Activated naive CD4-positive, alpha-beta T cell treated with anti-CD3 and anti-CD28 coated beads, Interleukin-2, amount 10 ng/mL, durations not matched to agents 7 days and 5 days (primary cell): ENCODE measurements at regions of chr17 and their contacts with region 1.

Region 1: DNA sequence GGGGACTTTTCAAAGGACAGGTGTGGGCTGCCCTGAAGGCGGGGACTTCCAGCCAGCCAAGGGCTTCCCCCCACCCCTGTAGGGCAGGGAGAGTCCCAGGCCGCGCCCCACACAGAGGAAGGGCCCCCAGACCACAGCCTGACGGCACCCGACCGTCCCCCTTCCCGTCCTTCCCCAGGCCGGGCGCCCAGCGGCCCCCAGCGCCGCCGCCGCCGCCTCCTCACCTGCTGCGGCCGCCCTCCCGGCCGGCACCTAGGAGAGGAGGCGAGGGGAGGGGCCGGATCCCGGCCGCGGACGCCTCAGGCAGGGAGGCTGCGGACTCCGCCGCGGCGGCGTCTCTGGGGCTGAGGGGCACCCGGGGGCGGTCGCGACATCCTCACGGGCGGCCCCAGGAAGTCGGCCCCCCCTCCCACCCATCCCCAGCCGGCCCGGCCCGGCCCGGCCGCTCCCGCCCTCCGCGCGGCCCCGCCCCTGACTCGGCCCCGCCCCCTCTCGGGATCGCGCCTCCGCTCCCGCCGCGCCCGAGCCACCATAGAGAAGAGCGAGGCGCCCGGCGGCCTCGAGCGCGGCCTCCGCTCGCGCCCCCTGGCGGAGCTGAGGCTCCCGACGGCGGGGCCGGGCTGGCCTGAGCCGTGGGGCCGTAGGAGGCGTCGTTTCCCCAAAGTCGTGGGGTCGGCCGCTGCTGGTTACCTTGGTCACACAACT is 25.5 kb upstream of the RFFL start:
- DNase-seq: peak; percentile 89
- H3K4me3 Mint-ChIP-seq: peak overlapping the region; percentile 89
- H3K27ac Mint-ChIP-seq: peak overlapping the region; percentile 91
- H3K4me1 Mint-ChIP-seq: peaks cover 54% of the 10 kb centered on the region
- H3K27me3 Mint-ChIP-seq: no peaks in the 10 kb centered on the region

Region 2: DNA sequence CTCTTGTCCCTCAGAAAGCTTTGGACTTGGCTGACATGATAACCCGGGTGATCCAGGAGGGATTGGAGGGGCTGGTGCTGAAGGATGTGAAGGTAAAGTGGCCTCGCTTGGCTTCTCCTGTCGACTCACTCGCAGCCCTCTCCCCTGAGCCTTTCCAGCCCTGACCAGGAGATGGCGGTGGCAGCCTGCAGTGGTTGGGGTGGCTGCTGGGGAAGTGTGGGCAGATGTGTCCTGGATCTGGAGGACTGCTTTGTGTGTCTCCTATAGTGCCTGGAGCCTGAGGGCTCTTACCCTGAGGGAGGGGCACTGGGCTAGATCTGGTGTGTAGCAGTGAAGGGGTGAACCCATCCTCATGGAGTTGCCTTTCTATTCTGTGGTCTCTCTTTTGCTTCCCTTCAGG is 90.8 kb before region 1 on chr17:
- CTCF ChIA-PET with region 1: interaction called, 30 read pairs
- DNase-seq: peak; percentile 88
- H3K4me3 Mint-ChIP-seq: no peak overlapping the region
- H3K27ac Mint-ChIP-seq: peak overlapping the region; percentile 33
- H3K4me1 Mint-ChIP-seq: peaks cover 5% of the 10 kb centered on the region
- H3K27me3 Mint-ChIP-seq: no peaks in the 10 kb centered on the region

Region 3: GRCh38 chr17:35051183-35051578 is 37.9 kb before region 1 on chr17:
- CTCF ChIA-PET with region 1: interaction called, 11 read pairs
- DNase-seq: peak; percentile 59
- H3K4me3 Mint-ChIP-seq: peak overlapping the region; percentile 37
- H3K27ac Mint-ChIP-seq: peak overlapping the region; percentile 93
- H3K4me1 Mint-ChIP-seq: peaks cover 66% of the 10 kb centered on the region
- H3K27me3 Mint-ChIP-seq: no peaks in the 10 kb centered on the region

Region 4: DNA sequence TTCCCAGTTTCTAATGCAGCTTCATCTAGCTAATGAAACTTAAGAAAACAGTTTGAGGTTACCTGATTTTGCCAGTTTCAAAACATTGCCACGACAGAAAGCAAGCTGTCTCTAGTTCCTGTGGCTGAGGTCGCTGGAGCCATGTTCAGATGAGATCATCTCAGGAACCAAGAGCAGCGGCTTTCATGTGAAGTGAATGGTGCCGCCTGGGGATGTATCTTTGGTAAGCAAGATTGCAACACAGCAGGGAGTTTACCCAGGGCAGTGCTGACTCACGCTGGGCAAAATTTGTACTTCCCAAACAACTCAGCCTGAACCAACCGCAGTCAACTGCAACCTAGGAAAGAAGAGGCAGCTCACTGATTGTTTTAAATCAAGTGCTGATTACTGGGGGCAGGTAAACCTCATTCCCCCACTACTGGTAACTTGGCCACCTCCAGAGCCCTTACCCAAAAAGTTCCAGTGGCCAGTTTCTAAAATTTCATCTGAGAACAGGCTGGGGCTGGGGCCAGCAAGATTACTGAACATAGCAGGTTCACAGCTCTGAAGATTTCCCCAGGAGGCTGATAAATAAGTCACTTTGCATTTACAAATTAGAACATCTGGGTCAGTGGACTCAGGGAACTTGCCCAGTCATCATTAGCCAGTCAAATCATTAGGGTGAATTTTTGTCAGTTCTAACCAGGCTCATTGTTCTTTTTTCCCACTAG is 25.4 kb before region 1 on chr17 and contains the start of gene RFFL:
- CTCF ChIA-PET with region 1: interaction called, 12 read pairs
- DNase-seq: peak; percentile 91
- H3K4me3 Mint-ChIP-seq: peak within 1 kb of the TSS; percentile 35
- H3K27ac Mint-ChIP-seq: peak within 1 kb of the TSS; percentile 92
- H3K4me1 Mint-ChIP-seq: peaks cover 57% of the 10 kb centered on the region
- H3K27me3 Mint-ChIP-seq: no peaks in the 10 kb centered on the region

Region 5: GRCh38 chr17:35119368-35120165 is 30.5 kb after region 1 on chr17 and contains the start of gene RAD51D:
- CTCF ChIA-PET with region 1: interaction called, 31 read pairs
- DNase-seq: peak; percentile 85
- H3K4me3 Mint-ChIP-seq: peak within 1 kb of the TSS; percentile 90
- H3K27ac Mint-ChIP-seq: peak within 1 kb of the TSS; percentile 91
- H3K4me1 Mint-ChIP-seq: peaks cover 37% of the 10 kb centered on the region
- H3K27me3 Mint-ChIP-seq: peaks cover 9% of the 10 kb centered on the region

Region 6: DNA sequence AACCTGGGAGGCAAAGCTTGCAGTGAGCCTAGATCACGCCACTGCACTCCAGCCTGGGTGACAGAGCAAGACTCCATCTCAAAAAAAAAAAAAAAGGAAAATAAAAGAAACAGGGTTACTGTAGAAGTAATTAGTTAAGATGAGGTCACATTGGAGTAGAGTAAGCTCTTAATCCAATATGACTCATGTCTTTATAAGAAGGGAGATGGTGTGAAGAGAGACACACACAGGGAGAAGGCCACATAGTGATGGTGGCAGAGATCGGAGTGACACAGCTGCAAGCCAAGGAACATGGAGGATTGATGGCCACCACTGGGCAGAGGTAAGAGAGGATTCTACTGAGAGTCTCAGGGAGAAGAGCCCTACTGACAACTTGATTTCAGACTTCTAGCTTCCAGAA is 138.5 kb after region 1 on chr17:
- CTCF ChIA-PET with region 1: no interaction called
- DNase-seq: no peak
- H3K4me3 Mint-ChIP-seq: no peak overlapping the region
- H3K27ac Mint-ChIP-seq: no peak overlapping the region
- H3K4me1 Mint-ChIP-seq: peaks cover 15% of the 10 kb centered on the region
- H3K27me3 Mint-ChIP-seq: no peaks in the 10 kb centered on the region

Region 7: DNA sequence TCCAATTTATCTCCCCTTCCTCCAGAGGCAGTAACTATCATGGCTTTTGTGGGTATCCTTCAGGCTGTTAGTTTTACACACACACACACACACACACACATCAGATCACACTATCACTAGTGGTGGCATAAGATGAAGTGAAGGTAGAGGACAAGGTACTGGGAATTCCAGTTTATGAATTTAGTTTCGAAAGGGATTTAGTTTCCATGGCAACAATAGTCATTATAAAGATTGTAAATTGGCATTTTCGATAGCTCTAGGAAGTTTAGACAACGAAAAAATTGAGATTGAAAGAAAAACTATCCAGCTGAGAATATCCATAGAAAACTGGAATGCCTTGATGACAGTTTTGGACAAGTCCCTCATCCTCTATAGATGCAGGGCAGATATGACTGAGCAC is 184.7 kb after region 1 on chr17:
- CTCF ChIA-PET with region 1: no interaction called
- DNase-seq: no peak
- H3K4me3 Mint-ChIP-seq: no peak overlapping the region
- H3K27ac Mint-ChIP-seq: peak overlapping the region; percentile 76
- H3K4me1 Mint-ChIP-seq: peaks cover 46% of the 10 kb centered on the region
- H3K27me3 Mint-ChIP-seq: no peaks in the 10 kb centered on the region